Dendritic cell treated with granulocyte-macrophage colony-stimulating factor and Interleukin-4, amounts not matched to agents 40 ng/mL and 50 ng/mL, for 4 days (primary cell): ENCODE measurements at regions of chr5 and their contacts with region 1.

Region 1: GRCh38 chr5:172770675-172771438 is at the start of gene DUSP1:
- H3K4me3 Mint-ChIP-seq: peak within 1 kb of the TSS; percentile 92
- H3K27ac Mint-ChIP-seq: peak within 1 kb of the TSS; percentile 100
- H3K4me1 Mint-ChIP-seq: peaks cover 80% of the 10 kb centered on the region
- H3K27me3 Mint-ChIP-seq: no peaks in the 10 kb centered on the region

Region 2: GRCh38 chr5:172733131-172733973 is 37.5 kb before region 1 on chr5:
- intact Hi-C with region 1: no loop called
- H3K4me3 Mint-ChIP-seq: no peak overlapping the region
- H3K27ac Mint-ChIP-seq: peak overlapping the region; percentile 70
- H3K4me1 Mint-ChIP-seq: peaks cover 15% of the 10 kb centered on the region
- H3K27me3 Mint-ChIP-seq: peaks cover 7% of the 10 kb centered on the region

Region 3: GRCh38 chr5:172798422-172799200 is 27.8 kb after region 1 on chr5:
- intact Hi-C with region 1: loop called (anchors 2 kb)
- H3K4me3 Mint-ChIP-seq: peak overlapping the region; percentile 37
- H3K27ac Mint-ChIP-seq: peak overlapping the region; percentile 95
- H3K4me1 Mint-ChIP-seq: peaks cover 88% of the 10 kb centered on the region
- H3K27me3 Mint-ChIP-seq: no peaks in the 10 kb centered on the region

Region 4: GRCh38 chr5:172806897-172807672 is 36.2 kb after region 1 on chr5:
- intact Hi-C with region 1: loop called (anchors 1 kb)
- H3K4me3 Mint-ChIP-seq: peak overlapping the region; percentile 78
- H3K27ac Mint-ChIP-seq: peak overlapping the region; percentile 98
- H3K4me1 Mint-ChIP-seq: peaks cover 43% of the 10 kb centered on the region
- H3K27me3 Mint-ChIP-seq: no peaks in the 10 kb centered on the region

Region 5: GRCh38 chr5:172870291-172870714 is 99.4 kb after region 1 on chr5:
- intact Hi-C with region 1: loop called (anchors 1 kb)
- H3K4me3 Mint-ChIP-seq: no peak overlapping the region
- H3K27ac Mint-ChIP-seq: no peak overlapping the region
- H3K4me1 Mint-ChIP-seq: peaks cover 6% of the 10 kb centered on the region
- H3K27me3 Mint-ChIP-seq: no peaks in the 10 kb centered on the region

Region 6: DNA sequence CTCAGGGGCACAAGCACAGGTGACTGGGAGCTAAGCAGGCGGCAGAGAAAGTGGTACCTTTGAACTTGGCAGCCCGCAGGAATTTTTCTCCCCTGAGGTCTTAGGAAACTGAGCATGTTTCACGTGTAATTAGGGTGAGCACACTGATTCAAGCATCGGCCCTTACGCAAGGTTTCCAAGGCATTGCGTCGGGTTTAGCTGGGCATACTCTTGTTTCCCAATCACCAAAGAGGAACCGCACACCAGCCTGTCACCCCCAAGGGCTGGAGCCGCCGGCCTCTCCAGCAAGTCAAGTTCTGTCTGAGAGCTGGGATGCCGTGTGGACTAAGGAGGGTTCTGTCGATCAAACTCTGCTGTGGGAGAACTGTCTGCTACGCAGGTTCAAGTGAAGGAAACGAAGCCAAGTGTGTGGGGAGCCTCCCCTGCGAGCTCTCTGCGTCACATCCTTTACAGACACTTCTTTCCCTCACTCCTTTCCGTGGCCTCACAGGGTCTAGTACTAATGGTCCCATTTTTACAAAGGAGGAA is 116.2 kb after region 1 on chr5:
- intact Hi-C with region 1: loop called (anchors 5 kb)
- H3K4me3 Mint-ChIP-seq: no peak overlapping the region
- H3K27ac Mint-ChIP-seq: peak overlapping the region; percentile 88
- H3K4me1 Mint-ChIP-seq: peaks cover 65% of the 10 kb centered on the region
- H3K27me3 Mint-ChIP-seq: no peaks in the 10 kb centered on the region